PC-3 (cell line): ENCODE measurements at regions of chr18 and their contacts with region 1.

Region 1: DNA sequence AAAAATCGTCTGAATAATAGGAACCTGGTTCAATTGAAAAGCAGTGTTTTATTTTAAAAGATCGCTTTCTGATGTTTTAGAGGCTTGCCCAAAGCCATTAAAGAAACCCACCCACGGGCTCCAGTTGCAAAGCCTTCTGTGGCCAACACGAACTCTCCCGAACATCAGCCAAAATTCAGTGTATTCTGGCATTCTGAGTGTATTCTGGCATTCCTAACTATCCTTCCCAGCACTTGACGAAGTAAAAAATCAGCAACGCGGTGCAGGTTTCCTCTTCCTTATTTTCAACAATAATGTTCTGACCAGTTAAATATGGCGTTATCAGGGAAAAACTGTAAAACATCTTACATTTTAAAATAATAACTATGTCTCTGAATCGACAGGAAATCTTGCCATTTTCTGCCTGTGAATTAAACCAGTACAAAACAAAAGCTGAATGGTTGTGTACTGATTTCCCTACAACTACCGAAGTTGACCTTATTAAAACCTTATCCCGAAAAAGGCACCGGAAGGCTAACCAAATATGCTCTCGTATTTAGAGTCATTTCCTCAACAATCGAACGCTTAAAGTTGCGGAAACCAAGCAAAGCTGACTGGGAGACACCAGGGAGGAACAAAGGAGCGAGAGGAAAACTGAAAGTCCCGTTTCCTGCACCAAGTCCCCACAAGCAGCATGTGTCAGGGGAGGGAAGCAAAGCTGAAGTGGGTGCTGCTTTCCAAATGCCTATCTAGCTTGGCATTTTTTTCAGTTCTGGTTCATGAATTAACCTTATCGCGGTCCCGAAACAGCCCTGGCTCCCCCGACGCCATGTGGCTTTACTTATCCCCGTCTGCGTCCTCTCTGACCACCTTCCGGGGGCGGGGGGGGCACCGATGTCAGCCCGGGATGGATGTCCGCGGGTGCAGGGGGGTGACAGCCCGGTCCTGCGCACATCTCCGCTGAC is 44.3 kb downstream of the ZNF516 start:
- DNase-seq: peak; percentile 29
- ATAC-seq: peak; percentile 76
- H3K4me3 ChIP-seq: peak overlapping the region; percentile 68
- H3K27ac ChIP-seq: peak overlapping the region; percentile 26; the same call in 1 of the 2 replicates
- H3K4me1 ChIP-seq: peaks cover 5% of the 10 kb centered on the region
- H3K27me3 ChIP-seq: peaks cover 56% of the 10 kb centered on the region
- CTCF ChIP-seq: no peak

Region 2: GRCh38 chr18:76492669-76493212 is 42.0 kb after region 1 on chr18:
- CTCF ChIA-PET with region 1: no interaction called
- POLR2A ChIA-PET with region 1: no interaction called
- intact Hi-C with region 1: loop called (anchors 5 kb)
- DNase-seq: peak; percentile 90
- ATAC-seq: peak; percentile 78
- H3K4me3 ChIP-seq: peak overlapping the region; percentile 67
- H3K27ac ChIP-seq: no peak overlapping the region
- H3K4me1 ChIP-seq: no peaks in the 10 kb centered on the region
- H3K27me3 ChIP-seq: peaks cover 82% of the 10 kb centered on the region
- CTCF ChIP-seq: no peak